ENCODE measurements at regions of chr14 and their contacts with region 1.

Region 1: DNA sequence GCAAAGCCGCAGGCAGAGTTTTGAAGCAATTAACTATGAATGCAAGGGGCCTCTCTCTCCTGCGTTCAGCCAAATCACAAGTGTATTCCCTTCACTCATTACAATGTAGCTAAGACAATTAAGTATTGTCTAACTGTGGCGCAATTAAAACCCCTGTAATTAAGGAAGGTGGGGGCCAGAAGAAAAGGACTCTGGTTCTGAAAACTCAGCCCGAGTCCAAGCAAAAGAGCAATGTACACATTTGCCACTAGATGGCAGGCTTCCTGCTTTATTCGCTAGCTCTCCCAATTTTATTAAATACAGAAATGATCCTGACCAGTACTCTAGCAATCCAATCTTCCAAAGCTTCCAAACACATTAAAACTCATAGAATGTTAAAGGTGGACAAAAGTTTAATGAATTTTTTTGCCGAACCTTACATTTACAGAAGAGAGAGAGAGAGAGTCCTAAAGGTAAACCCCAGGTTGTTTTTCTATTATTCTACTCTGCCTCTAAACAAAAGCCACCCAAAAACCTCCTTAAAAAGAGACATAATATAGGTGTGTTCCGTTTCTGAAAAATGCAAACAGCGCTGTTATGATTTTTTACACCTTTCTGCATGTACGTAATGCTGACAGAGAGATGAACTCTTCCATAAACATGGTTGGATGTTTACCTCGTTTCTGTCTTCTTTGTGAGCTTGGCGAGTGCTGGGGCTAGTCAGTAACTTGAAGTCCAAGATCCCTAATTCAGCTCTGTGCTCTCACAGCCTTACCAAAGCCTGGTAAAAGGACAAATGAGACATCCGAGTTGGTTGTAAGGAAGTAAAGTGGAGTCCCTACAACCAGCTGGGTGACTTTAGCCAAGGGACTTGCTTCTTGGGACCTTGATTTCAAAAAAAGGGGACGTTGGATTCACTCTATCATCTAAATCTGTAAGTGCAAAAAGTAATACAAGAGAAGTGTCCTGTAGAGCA is 50.9 kb upstream of the VASH1 start:
- DNase-seq: peak in 1 of 2 donors; percentile 71
- ATAC-seq: peak in 2 of 3 donors; percentile 38 to 62
- H3K4me3 ChIP-seq: no peak overlapping the region
- H3K4me3 Mint-ChIP-seq: no peak overlapping the region
- H3K27ac ChIP-seq: no peak overlapping the region
- H3K27ac Mint-ChIP-seq: no peak overlapping the region
- H3K4me1 ChIP-seq: no peaks in the 10 kb centered on the region
- H3K4me1 Mint-ChIP-seq: no peaks in the 10 kb centered on the region
- H3K27me3 ChIP-seq: no peaks in the 10 kb centered on the region
- H3K27me3 Mint-ChIP-seq: peaks cover 1 to 7% of the 10 kb centered on the region in 2 donors
- CTCF ChIP-seq: peak; percentile 80

Region 2: GRCh38 chr14:76672123-76672522 is 38.2 kb before region 1 on chr14:
- intact Hi-C with region 1: no loop called
- DNase-seq: no peak
- ATAC-seq: no peak
- H3K4me3 ChIP-seq: no peak overlapping the region
- H3K4me3 Mint-ChIP-seq: no peak overlapping the region
- H3K27ac ChIP-seq: no peak overlapping the region
- H3K27ac Mint-ChIP-seq: no peak overlapping the region
- H3K4me1 ChIP-seq: no peaks in the 10 kb centered on the region
- H3K4me1 Mint-ChIP-seq: no peaks in the 10 kb centered on the region
- H3K27me3 ChIP-seq: no peaks in the 10 kb centered on the region
- H3K27me3 Mint-ChIP-seq: peaks cover 0 to 14% of the 10 kb centered on the region in 2 donors
- CTCF ChIP-seq: no peak

Region 3: GRCh38 chr14:76784266-76785264 is 74.2 kb after region 1 on chr14:
- intact Hi-C with region 1: loop called (anchors 1 kb)
- DNase-seq: peak; percentile 46 to 75
- ATAC-seq: peak; percentile 85 to 99 (median 97)
- H3K4me3 ChIP-seq: no peak overlapping the region
- H3K4me3 Mint-ChIP-seq: no peak overlapping the region
- H3K27ac ChIP-seq: no peak overlapping the region
- H3K27ac Mint-ChIP-seq: peak overlapping the region in 1 of 2 donors; percentile 64
- H3K4me1 ChIP-seq: peaks cover 10% of the 10 kb centered on the region
- H3K4me1 Mint-ChIP-seq: peaks cover 10 to 16% of the 10 kb centered on the region in 2 donors
- H3K27me3 ChIP-seq: no peaks in the 10 kb centered on the region
- H3K27me3 Mint-ChIP-seq: no peaks in the 10 kb centered on the region
- CTCF ChIP-seq: peak; percentile 53

Region 4: GRCh38 chr14:76812211-76813044 is 102.1 kb after region 1 on chr14 and contains the start of gene ANGEL1:
- intact Hi-C with region 1: loop called (anchors 1 kb)
- DNase-seq: peak; percentile 98 to 99
- ATAC-seq: peak; percentile 92 to 98 (median 94)
- H3K4me3 ChIP-seq: peak within 1 kb of the TSS; percentile 65
- H3K4me3 Mint-ChIP-seq: peak within 1 kb of the TSS; percentile 90
- H3K27ac ChIP-seq: peak within 1 kb of the TSS; percentile 86
- H3K27ac Mint-ChIP-seq: peak within 1 kb of the TSS; percentile 88 to 95
- H3K4me1 ChIP-seq: peaks cover 21% of the 10 kb centered on the region
- H3K4me1 Mint-ChIP-seq: peaks cover 25 to 30% of the 10 kb centered on the region in 2 donors
- H3K27me3 ChIP-seq: no peaks in the 10 kb centered on the region
- H3K27me3 Mint-ChIP-seq: no peaks in the 10 kb centered on the region
- CTCF ChIP-seq: no peak
- total RNA-seq, gene ANGEL1: 12.2 to 20.2 (median 17.2) TPM

Region 5: GRCh38 chr14:77040741-77041653 is 330.7 kb after region 1 on chr14:
- intact Hi-C with region 1: no loop called
- DNase-seq: peak in 1 of 2 donors; percentile 79
- ATAC-seq: peak; percentile 43 to 67 (median 55)
- H3K4me3 ChIP-seq: peak overlapping the region; percentile 28
- H3K4me3 Mint-ChIP-seq: peak overlapping the region; percentile 87
- H3K27ac ChIP-seq: peak overlapping the region; percentile 92
- H3K27ac Mint-ChIP-seq: peak overlapping the region; percentile 96 to 99
- H3K4me1 ChIP-seq: peaks cover 86% of the 10 kb centered on the region
- H3K4me1 Mint-ChIP-seq: peaks cover 73 to 83% of the 10 kb centered on the region in 2 donors
- H3K27me3 ChIP-seq: no peaks in the 10 kb centered on the region
- H3K27me3 Mint-ChIP-seq: no peaks in the 10 kb centered on the region
- CTCF ChIP-seq: no peak